B cell (primary cell): ENCODE measurements at regions of chr1 and their contacts with region 1.

Region 1: DNA sequence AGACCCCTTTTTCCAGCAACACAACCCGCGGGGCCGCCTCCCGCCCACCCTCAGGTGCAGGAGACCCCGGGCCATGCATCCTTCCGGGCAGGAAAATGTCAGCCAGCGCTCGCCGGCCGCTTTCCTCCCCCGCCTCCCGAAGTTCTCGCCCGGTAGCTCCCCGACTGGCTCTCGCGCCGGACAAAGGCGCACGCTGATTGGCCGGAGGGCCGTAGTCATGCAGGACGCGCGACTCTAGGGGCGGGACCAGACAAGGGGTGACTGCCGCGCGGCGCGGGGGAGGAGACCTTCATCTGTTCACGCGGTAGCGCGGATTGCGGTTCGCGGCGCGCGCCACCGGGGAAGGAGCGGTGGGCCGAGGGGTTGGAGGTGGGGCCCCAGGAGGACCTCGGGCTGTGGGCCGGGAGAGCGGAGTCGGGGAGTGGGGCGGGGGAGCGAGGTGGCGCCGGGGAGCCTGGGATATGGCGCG is at the start of gene FLVCR1:
- DNase-seq: peak; percentile 93
- ATAC-seq: peak; percentile 98
- H3K4me3 ChIP-seq: peak within 1 kb of the TSS; percentile 71 to 96 (median 82)
- H3K4me3 Mint-ChIP-seq: peak within 1 kb of the TSS; percentile 95
- H3K27ac ChIP-seq: peak within 1 kb of the TSS; percentile 51 to 85
- H3K27ac Mint-ChIP-seq: peak within 1 kb of the TSS; percentile 96
- H3K4me1 ChIP-seq: peaks cover 25 to 32% of the 10 kb centered on the region in 2 donors
- H3K4me1 Mint-ChIP-seq: peaks cover 22% of the 10 kb centered on the region
- H3K27me3 ChIP-seq: no peaks in the 10 kb centered on the region
- H3K27me3 Mint-ChIP-seq: no peaks in the 10 kb centered on the region
- CTCF ChIP-seq: no peak
- total RNA-seq, gene FLVCR1: 19.2 and 19.7 TPM in 2 replicates

Region 2: GRCh38 chr1:212950243-212951125 is 92.5 kb after region 1 on chr1 and contains the start of gene VASH2:
- CTCF ChIA-PET with region 1: no interaction called
- POLR2A ChIA-PET with region 1: interaction called, 3 read pairs
- intact Hi-C with region 1: loop called (anchors 2 kb)
- DNase-seq: peak; percentile 79
- ATAC-seq: peak; percentile 99
- H3K4me3 ChIP-seq: peak within 1 kb of the TSS; percentile 55 to 87 (median 56)
- H3K4me3 Mint-ChIP-seq: peak within 1 kb of the TSS; percentile 91
- H3K27ac ChIP-seq: no peak within 1 kb of the TSS
- H3K27ac Mint-ChIP-seq: no peak within 1 kb of the TSS
- H3K4me1 ChIP-seq: peaks cover 29 to 40% of the 10 kb centered on the region in 2 donors
- H3K4me1 Mint-ChIP-seq: peaks cover 26% of the 10 kb centered on the region
- H3K27me3 ChIP-seq: peaks cover 0 to 27% (median 7%) of the 10 kb centered on the region in 4 experiments
- H3K27me3 Mint-ChIP-seq: peaks cover 18% of the 10 kb centered on the region
- CTCF ChIP-seq: no peak
- total RNA-seq, gene VASH2: not detected in 2 replicates

Region 3: DNA sequence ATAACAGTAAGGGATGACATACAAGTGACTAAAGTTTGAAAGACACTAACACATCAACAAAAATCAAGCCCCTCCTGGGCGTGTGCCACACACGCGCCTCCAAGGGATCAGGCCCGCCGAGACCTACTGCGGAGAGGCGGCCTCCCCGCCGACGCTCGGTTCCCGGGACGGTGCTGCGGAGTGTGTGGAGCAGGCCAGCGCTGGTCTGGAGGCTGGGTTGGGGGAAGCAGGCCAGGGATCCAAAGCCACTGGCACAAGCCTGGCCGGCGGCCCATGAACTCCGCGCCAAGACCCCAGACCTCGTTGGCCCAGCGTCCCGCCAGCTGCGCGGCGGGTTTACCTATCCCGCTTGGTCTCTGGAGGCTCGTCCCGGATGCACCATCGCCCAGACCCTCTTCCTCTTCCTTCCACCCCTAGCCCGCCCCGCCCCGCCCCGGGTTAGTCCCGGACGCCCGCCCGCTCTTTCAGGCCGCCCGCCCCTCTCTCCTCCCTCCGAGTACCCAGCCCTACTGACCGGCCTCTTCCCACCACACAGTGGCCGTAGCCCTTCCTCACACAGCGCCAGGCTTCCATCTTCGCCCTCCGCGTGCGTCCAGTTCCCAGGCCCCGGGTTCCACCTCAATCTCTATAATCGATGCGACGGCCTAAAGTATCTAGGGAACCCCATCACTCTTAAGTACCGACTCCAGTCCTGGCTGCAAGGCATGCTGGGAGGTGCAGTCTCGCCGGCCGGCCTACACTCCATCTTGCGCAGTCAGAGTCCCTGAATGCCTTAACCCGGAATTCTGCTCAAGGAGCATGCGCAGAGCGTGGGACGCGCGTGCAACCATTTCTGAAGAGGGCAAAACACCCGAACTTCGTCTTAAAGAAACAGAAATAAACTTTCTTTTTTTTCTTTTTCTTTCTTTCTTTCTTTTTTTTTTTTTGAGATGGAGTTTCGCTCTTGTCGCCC is 157.3 kb after region 1 on chr1 and contains the start of gene ANGEL2:
- CTCF ChIA-PET with region 1: no interaction called
- POLR2A ChIA-PET with region 1: interaction called, 5 read pairs
- intact Hi-C with region 1: loop called (anchors 1 kb)
- DNase-seq: peak; percentile 97
- ATAC-seq: peak; percentile 96
- H3K4me3 ChIP-seq: peak within 1 kb of the TSS; percentile 65 to 89 (median 77)
- H3K4me3 Mint-ChIP-seq: peak within 1 kb of the TSS; percentile 98
- H3K27ac ChIP-seq: peak within 1 kb of the TSS; percentile 81 to 92
- H3K27ac Mint-ChIP-seq: peak within 1 kb of the TSS; percentile 99
- H3K4me1 ChIP-seq: peaks cover 7 to 14% of the 10 kb centered on the region in 2 donors
- H3K4me1 Mint-ChIP-seq: peaks cover 31% of the 10 kb centered on the region
- H3K27me3 ChIP-seq: no peaks in the 10 kb centered on the region
- H3K27me3 Mint-ChIP-seq: no peaks in the 10 kb centered on the region
- CTCF ChIP-seq: no peak
- total RNA-seq, gene ANGEL2: 86.0 and 94.2 TPM in 2 replicates

Region 4: GRCh38 chr1:213135572-213135971 is 277.5 kb after region 1 on chr1:
- CTCF ChIA-PET with region 1: no interaction called
- POLR2A ChIA-PET with region 1: no interaction called
- intact Hi-C with region 1: no loop called
- DNase-seq: no peak
- ATAC-seq: no peak
- H3K4me3 ChIP-seq: no peak overlapping the region
- H3K4me3 Mint-ChIP-seq: no peak overlapping the region
- H3K27ac ChIP-seq: no peak overlapping the region
- H3K27ac Mint-ChIP-seq: no peak overlapping the region
- H3K4me1 ChIP-seq: no peaks in the 10 kb centered on the region
- H3K4me1 Mint-ChIP-seq: peaks cover 4% of the 10 kb centered on the region
- H3K27me3 ChIP-seq: no peaks in the 10 kb centered on the region
- H3K27me3 Mint-ChIP-seq: no peaks in the 10 kb centered on the region
- CTCF ChIP-seq: no peak

Region 5: GRCh38 chr1:214281021-214281719 is 1423.1 kb after region 1 on chr1 and contains the start of gene SMYD2:
- CTCF ChIA-PET with region 1: no interaction called
- POLR2A ChIA-PET with region 1: no interaction called
- intact Hi-C with region 1: loop called (anchors 5 kb)
- DNase-seq: peak; percentile 79
- ATAC-seq: peak; percentile 77
- H3K4me3 ChIP-seq: peak within 1 kb of the TSS; percentile 56 to 86 (median 69)
- H3K4me3 Mint-ChIP-seq: peak within 1 kb of the TSS; percentile 89
- H3K27ac ChIP-seq: peak within 1 kb of the TSS; percentile 58 to 74
- H3K27ac Mint-ChIP-seq: peak within 1 kb of the TSS; percentile 78
- H3K4me1 ChIP-seq: peaks cover 17 to 28% of the 10 kb centered on the region in 2 donors
- H3K4me1 Mint-ChIP-seq: peaks cover 29% of the 10 kb centered on the region
- H3K27me3 ChIP-seq: no peaks in the 10 kb centered on the region
- H3K27me3 Mint-ChIP-seq: no peaks in the 10 kb centered on the region
- CTCF ChIP-seq: no peak
- total RNA-seq, gene SMYD2: 29.1 and 29.5 TPM in 2 replicates